A549 (cell line): ENCODE measurements at regions of chr1 and their contacts with region 1.

Region 1: GRCh38 chr1:167533851-167534300 is 15.5 kb upstream of the CD247 start:
- DNase-seq: peak; percentile 68 to 90
- ATAC-seq: peak; percentile 89 to 95
- H3K4me3 ChIP-seq: no peak overlapping the region
- H3K27ac ChIP-seq: no peak overlapping the region
- H3K4me1 ChIP-seq: 0 out of 3 replicates have a peak, but pooled peaks cover 4% of the 10 kb centered on the region
- CTCF ChIP-seq: peak; percentile 88
- EP300 ChIP-seq: no peak
- POLR2A ChIP-seq: no peak
- RAD21 ChIP-seq: peak; percentile 86 to 90

Region 2: DNA sequence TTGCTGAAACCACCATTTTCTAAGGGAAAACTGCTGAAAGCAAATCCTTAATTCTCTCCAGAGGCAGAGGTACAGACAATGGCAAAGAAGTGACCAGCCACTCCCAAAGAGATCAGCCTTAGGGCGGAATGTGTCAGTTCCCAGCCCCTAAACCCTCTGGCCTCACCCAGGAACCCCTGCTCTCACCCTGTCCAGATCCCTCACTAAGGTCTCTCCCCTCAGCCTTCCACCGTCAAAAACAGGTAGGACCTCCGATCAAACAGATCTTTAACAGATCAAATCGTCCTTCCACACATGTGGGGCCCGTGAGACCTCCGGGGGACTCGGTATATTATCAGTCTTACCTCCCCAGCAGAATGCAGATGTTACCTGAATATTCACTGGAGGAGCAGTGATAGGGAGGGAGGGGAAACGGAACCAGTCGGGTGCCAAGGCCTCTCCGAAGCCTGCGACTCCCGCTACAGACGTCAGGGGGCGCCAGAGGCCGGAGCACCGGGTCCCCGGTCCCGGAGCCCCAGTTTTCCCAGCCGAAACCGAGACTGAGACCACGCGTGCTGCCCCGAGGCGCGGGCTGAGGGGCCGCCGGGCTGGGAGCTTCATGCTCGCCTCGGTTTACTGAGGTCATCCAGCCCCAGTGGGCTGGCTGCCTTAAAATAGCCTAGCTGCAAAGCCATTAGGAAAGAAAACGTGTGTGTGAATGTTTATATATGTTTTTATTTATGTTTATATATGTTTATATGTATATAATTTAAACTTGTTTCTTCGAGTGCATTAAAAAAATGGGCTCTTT is 467.3 kb before region 1 on chr1:
- CTCF ChIA-PET with region 1: interaction called, 56 read pairs
- POLR2A ChIA-PET with region 1: no interaction called
- DNase-seq: peak; percentile 45 to 86
- ATAC-seq: peak; percentile 89 to 98
- H3K4me3 ChIP-seq: peak overlapping the region; percentile 40
- H3K27ac ChIP-seq: peak overlapping the region; percentile 65 to 82
- H3K4me1 ChIP-seq: no peaks in the 10 kb centered on the region
- CTCF ChIP-seq: peak; percentile 97
- EP300 ChIP-seq: no peak
- POLR2A ChIP-seq: no peak
- RAD21 ChIP-seq: peak; percentile 96 to 99

Region 3: GRCh38 chr1:167412072-167412471 is 121.8 kb before region 1 on chr1:
- CTCF ChIA-PET with region 1: interaction called, 14 read pairs
- POLR2A ChIA-PET with region 1: no interaction called
- DNase-seq: no peak
- ATAC-seq: no peak
- H3K4me3 ChIP-seq: no peak overlapping the region
- H3K27ac ChIP-seq: no peak overlapping the region
- H3K4me1 ChIP-seq: no peaks in the 10 kb centered on the region
- CTCF ChIP-seq: no peak
- EP300 ChIP-seq: no peak
- POLR2A ChIP-seq: no peak
- RAD21 ChIP-seq: no peak

Region 4: DNA sequence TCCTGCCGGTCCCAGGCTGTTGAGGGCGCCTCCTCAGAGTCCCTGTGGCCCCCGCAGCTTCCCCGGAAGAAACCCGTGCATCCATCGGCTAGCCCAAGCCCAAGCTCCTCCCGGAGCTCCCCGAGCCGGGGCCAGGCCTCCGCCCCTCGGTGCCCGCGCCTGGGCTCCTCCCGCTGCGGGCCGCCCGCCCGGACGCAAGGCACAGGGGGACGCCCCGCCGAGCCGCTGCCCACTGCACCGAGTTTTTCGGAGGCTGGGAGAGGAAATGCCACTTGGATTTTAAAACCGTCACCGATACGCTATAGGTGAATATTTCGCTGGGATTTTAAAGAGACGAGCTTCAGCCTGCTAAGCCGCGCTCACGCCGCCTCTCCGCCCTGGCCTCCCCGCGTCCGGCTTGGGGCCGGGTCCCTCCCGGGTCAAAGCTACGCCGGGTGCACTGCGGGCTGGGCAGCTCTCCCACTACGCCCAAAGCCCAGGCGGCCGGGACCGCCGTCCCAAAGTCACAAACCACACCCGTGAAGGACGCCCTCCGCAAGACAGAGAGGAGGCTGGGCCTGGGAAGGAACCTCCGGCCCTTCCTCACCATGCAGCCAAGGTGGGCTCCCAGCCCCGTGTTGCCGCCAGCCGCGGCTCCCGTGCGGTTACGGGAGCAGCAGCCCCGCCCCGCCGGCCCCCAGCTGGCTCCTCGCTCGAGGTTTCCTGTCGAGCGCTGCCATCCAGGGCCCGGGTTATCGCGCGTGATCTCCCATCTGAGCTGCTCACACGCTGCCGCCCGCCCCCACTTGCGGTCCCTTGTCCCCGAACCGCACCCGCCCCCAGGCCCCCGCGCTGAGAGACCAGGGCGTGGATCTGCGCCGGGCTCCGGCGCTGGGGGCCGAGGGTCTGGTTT is 78.7 kb before region 1 on chr1:
- CTCF ChIA-PET with region 1: interaction called, 23 read pairs
- POLR2A ChIA-PET with region 1: interaction called, 5 read pairs
- DNase-seq: peak; percentile 41 to 59
- ATAC-seq: peak; percentile 86 to 92
- H3K4me3 ChIP-seq: peak overlapping the region; percentile 68
- H3K27ac ChIP-seq: peak overlapping the region; percentile 82 to 89
- H3K4me1 ChIP-seq: peaks cover 6% of the 10 kb centered on the region; the same call in 1 of the 3 replicates
- CTCF ChIP-seq: no peak
- EP300 ChIP-seq: no peak
- POLR2A ChIP-seq: peak; percentile 27
- RAD21 ChIP-seq: no peak

Region 5: DNA sequence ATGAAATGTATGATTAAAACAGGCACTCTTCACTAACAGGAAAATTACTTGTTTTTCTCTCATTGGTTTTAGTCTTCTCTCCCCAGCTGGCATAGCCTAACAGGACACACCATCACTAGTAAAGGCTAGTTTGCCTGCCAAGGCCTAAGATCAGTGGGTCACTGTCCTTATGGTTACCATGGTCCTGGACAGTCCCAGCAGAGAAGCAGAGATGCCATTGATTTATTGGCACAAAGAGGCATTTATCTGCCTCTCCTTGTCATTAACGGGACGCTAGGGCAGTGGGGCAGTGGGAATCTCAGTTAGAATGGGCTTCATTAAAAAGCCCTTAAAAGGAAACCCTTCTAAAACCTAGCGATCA is 29.4 kb before region 1 on chr1:
- CTCF ChIA-PET with region 1: interaction called, 10 read pairs
- POLR2A ChIA-PET with region 1: no interaction called
- DNase-seq: no peak
- ATAC-seq: no peak
- H3K4me3 ChIP-seq: no peak overlapping the region
- H3K27ac ChIP-seq: no peak overlapping the region
- H3K4me1 ChIP-seq: no peaks in the 10 kb centered on the region
- CTCF ChIP-seq: no peak
- EP300 ChIP-seq: no peak
- POLR2A ChIP-seq: no peak
- RAD21 ChIP-seq: no peak

Region 6: DNA sequence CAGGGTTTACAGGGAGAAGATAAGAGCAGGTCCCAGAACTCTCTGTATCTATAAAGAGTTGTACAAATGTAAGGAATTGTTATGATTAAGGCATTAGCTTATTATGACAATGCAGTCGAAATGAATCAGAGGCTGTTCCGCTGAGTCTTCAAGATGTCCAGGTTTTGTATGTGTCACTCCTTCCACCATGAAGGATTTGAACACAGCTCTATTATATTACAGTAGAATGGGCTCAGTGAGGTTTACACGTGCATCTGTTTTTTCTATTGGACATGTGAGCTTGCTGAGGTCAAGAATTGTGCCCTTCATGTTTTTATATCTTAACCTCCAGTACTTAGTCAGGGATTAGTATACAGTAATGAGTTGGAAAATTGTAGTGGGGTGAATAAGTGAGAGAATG is 274.2 kb after region 1 on chr1:
- CTCF ChIA-PET with region 1: no interaction called
- POLR2A ChIA-PET with region 1: no interaction called
- DNase-seq: no peak
- ATAC-seq: no peak
- H3K4me3 ChIP-seq: no peak overlapping the region
- H3K27ac ChIP-seq: no peak overlapping the region
- H3K4me1 ChIP-seq: peaks cover 21% of the 10 kb centered on the region
- CTCF ChIP-seq: no peak
- EP300 ChIP-seq: no peak
- POLR2A ChIP-seq: no peak
- RAD21 ChIP-seq: no peak

Region 7: DNA sequence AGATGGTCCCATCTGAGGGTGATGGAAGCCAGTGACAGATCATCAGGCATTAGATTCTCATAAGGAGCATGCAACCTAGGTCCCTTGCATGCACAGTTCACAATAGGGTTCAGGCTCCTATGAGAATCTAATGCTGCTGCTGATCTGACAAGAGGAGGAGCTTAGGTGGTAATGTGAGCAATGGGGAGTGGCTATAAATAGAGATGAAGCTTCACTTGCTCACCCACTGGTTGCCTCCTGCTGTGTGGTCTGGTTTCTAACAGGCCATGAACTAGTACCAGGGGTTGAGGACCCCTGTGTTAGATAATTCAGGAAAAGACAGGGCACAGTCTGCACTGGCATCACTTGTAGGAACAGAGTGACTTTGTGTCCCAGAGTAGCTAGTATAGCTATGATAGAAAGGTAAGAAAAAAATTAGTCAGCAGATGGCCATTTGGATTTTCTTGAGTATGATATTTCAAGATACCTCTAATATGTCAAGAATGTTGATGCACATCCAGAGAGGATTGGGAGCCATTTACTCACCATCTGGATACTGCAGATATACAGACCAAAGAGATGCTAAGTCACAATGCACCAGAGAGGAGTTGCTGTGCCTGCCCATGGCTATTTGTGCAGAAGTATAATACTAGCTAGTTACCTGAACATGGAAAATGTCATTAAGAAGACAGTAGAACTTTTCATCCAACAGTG is 326.5 kb after region 1 on chr1:
- CTCF ChIA-PET with region 1: no interaction called
- POLR2A ChIA-PET with region 1: no interaction called
- DNase-seq: no peak
- ATAC-seq: no peak
- H3K4me3 ChIP-seq: no peak overlapping the region
- H3K27ac ChIP-seq: no peak overlapping the region
- H3K4me1 ChIP-seq: no peaks in the 10 kb centered on the region
- CTCF ChIP-seq: no peak
- EP300 ChIP-seq: no peak
- POLR2A ChIP-seq: no peak
- RAD21 ChIP-seq: no peak